ENCODE measurements at regions of chr1 and their contacts with region 1.

Region 1: DNA sequence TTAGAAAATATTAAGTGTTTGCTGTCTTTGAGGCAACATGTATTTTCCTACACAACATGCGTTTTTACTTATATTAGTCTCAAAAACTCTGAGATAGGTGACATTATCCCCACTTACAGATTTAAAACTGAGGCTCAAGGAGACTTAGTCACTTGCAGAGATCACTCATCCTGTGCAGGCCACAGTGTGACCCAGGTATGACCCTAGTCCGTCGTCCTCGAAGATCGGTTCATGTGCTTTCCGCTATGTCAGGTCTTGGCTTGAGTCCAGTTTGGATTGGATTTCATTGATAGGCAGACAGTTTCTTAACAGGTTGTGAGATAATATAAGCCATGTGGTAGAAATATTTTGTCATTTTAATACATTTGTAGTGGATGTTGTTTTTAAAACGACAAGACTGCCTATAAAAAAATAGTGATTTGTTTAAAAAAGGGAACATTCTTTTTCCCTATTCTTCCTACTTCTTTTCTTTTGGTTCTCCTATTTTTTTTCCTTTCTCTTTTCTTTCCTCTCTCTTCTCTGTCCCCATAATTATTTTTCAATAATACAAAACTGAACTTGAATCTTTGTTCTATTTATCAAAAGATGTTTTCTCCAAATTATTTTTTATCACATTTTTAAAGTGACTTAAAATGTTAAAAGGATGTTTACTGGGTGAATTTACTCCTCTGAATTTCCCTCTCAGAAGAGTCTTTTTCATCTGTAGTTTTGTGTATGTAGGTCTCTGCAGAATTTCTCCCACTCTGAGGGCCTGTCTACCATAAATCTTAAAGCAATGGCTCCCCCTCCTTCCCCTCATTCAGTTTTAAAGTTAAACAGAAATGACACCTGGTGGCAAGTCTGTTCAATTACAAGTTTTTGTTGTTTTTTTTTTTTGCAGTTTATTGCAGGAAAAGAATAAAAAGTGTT is 81.8 kb downstream of the PHTF1 start:
- DNase-seq: peak; percentile 18 to 77
- H3K4me3 ChIP-seq: no peak overlapping the region
- H3K4me1 ChIP-seq: no peaks in the 10 kb centered on the region
- H3K27me3 ChIP-seq: no peaks in the 10 kb centered on the region

Region 2: DNA sequence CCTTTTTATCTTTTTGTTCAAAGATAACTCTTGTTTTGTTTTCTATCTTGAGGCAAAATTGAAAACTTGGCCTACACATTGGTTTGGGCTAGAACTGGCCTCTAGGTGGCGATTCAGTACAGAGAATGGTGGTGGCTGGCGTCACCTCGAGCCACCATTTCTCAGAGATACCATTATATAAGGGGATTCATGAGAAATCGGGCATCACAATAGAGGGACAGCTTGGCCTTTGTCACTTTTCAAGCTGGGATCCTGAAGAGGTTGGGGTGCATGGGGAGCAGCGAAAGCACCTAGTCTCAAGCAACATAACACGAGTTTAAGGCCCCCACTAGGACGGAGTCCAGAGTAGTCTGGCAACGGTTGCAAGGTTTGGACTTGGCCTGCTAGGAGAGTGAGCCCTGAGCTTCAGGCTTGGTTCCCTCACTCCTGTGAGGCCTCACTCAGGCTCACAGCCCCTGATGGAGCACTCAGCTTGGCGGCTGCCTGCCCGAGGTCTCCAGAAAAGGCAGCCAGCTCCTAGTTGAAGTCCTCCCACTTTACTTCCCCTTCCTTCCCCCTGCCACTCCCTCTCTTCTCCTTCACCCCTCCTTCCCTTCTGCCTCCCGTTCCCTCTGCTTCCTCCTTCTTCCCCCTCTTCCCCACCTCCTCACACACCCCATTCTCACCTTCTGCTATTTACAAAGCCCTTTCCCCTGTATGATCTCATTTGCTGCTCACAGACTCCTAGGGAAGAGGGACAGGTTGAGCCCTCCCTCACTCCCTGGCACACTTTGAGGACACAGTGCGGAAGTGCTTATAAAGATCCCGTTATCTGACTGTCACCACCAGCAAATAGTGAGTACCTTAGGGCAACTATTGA is 536.7 kb before region 1 on chr1:
- in situ Hi-C with region 1: loop called (anchors 5 kb)
- DNase-seq: peak; percentile 79 to 80
- H3K4me3 ChIP-seq: no peak overlapping the region
- H3K4me1 ChIP-seq: peaks cover 2% of the 10 kb centered on the region; the same call in 1 of the 2 replicates
- H3K27me3 ChIP-seq: no peaks in the 10 kb centered on the region

Region 3: DNA sequence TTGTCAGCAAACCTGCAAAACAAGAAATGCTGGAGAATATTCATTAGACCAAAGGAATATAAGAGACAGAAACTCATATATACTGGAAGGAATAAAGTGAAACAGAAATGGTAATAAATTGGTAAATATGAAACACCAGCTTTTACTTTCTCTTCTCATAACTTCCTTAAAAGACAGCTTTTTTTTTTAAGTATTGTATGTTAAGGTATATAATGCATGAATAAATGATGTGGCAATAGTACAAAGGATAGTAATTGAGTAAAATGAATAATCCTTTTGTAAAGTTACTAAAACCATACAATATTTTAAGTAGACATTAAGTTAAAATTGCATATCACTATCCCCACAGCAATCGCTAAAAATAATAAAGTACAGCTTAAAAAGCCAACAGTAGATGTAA is 768.7 kb after region 1 on chr1:
- in situ Hi-C with region 1: no loop called
- DNase-seq: no peak
- H3K4me3 ChIP-seq: no peak overlapping the region
- H3K4me1 ChIP-seq: peaks cover 18% of the 10 kb centered on the region
- H3K27me3 ChIP-seq: no peaks in the 10 kb centered on the region